Mammary epithelial cell (primary cell): ENCODE measurements at regions of chr1 and their contacts with region 1.

Region 1: GRCh38 chr1:205255941-205256780 is 28.4 kb downstream of the TMCC2 start:
- DNase-seq: peak; percentile 71
- H3K4me3 ChIP-seq: no peak overlapping the region
- H3K27ac ChIP-seq: no peak overlapping the region
- H3K4me1 ChIP-seq: peaks cover 30% of the 10 kb centered on the region
- H3K27me3 ChIP-seq: no peaks in the 10 kb centered on the region
- CTCF ChIP-seq: peak; percentile 95 to 98

Region 2: DNA sequence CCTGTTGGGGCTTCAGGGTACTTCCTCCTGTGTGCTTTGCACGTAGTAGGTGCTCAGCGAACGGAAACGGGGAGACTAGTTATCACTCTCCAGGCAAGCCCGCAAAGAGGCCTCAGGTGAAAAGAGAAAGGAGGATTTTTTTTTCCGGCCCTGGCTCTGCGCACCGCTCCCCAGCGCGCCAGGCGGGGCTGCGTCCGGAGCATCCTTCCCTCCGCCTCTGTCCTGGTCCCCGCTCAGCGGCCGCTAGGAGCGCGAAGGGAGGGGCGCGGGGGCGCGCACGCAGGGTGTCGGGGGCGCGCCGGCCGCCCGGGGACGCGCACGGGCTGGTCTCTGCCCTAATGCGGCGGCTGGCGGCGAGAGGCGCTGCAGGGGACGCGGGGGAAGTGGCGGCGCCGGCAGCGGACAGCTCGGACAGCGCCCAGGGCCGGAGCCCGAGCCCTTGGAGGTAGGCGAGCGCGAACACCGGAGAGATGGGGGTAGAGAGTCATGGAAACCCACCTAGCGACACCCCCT is 427.8 kb before region 1 on chr1:
- CTCF ChIA-PET with region 1: no interaction called
- dilution Hi-C with region 1: no loop called
- in situ Hi-C with region 1: no loop called
- intact Hi-C with region 1: loop called (anchors 5 kb)
- DNase-seq: peak; percentile 72
- H3K4me3 ChIP-seq: peak overlapping the region; percentile 23 to 62 (median 42)
- H3K27ac ChIP-seq: no peak overlapping the region
- H3K4me1 ChIP-seq: peaks cover 3% of the 10 kb centered on the region
- H3K27me3 ChIP-seq: peaks cover 2% of the 10 kb centered on the region
- CTCF ChIP-seq: peak in 1 of 2 donors; percentile 8

Region 3: GRCh38 chr1:204989266-204990058 is 266.7 kb before region 1 on chr1:
- CTCF ChIA-PET with region 1: interaction called, 6 read pairs
- dilution Hi-C with region 1: no loop called
- in situ Hi-C with region 1: loop called in 1 of 2 experiments (anchors 10 kb)
- intact Hi-C with region 1: loop called (anchors 1 kb)
- DNase-seq: peak; percentile 79
- H3K4me3 ChIP-seq: no peak overlapping the region
- H3K27ac ChIP-seq: no peak overlapping the region
- H3K4me1 ChIP-seq: peaks cover 4% of the 10 kb centered on the region
- H3K27me3 ChIP-seq: no peaks in the 10 kb centered on the region
- CTCF ChIP-seq: peak; percentile 99 to 100

Region 4: GRCh38 chr1:205061665-205062069 is 194.5 kb before region 1 on chr1:
- CTCF ChIA-PET with region 1: interaction called, 5 read pairs
- dilution Hi-C with region 1: no loop called
- in situ Hi-C with region 1: loop called in 1 of 2 experiments (anchors 10 kb)
- intact Hi-C with region 1: loop called (anchors 1 kb)
- DNase-seq: peak; percentile 48
- H3K4me3 ChIP-seq: no peak overlapping the region
- H3K27ac ChIP-seq: no peak overlapping the region
- H3K4me1 ChIP-seq: no peaks in the 10 kb centered on the region
- H3K27me3 ChIP-seq: no peaks in the 10 kb centered on the region
- CTCF ChIP-seq: peak; percentile 92 to 93

Region 5: DNA sequence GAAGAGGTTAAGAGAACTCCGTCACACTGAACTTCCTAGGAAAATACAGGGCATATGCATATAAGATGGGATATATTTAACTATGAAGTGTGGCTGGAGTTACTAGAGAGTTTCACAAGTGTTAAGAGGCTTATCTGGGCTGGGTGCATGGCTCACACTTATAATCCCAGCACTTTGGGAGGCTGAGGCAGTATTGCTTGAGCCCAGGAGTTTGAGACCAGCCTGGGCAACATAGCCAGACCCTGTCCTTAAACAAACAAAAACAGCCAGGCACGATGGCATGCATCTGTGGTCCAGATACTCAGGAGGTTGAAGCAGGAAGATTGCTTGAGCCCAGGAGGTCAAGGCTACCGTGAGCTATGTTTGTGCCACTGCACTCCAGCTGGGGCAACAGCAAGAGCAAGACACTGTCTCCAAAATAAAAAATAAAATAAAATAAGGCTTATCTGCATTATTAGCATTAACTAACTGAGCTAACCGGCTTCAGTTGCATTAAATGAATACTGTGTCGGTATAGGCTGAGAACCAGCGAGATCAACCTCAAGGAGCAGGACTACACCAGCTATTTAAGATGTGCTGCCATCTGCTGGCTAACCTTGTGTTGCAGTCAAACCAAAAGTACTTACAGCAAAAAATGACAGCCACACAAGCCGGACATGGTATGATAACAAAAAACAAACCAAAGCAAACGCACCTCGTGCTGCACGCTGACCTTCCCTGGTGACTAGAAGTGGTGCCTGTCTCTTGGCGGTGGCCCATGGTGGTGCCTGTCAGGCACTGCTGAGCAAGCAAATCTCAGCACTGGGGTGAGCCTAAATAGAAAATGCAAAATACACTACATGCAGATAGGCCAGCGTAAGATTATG is 114.7 kb before region 1 on chr1:
- CTCF ChIA-PET with region 1: interaction called, 3 read pairs
- dilution Hi-C with region 1: no loop called
- in situ Hi-C with region 1: no loop called
- intact Hi-C with region 1: loop called (anchors 1 kb)
- DNase-seq: peak; percentile 66
- H3K4me3 ChIP-seq: no peak overlapping the region
- H3K27ac ChIP-seq: no peak overlapping the region
- H3K4me1 ChIP-seq: peaks cover 8% of the 10 kb centered on the region
- H3K27me3 ChIP-seq: no peaks in the 10 kb centered on the region
- CTCF ChIP-seq: peak; percentile 69 to 74

Region 6: DNA sequence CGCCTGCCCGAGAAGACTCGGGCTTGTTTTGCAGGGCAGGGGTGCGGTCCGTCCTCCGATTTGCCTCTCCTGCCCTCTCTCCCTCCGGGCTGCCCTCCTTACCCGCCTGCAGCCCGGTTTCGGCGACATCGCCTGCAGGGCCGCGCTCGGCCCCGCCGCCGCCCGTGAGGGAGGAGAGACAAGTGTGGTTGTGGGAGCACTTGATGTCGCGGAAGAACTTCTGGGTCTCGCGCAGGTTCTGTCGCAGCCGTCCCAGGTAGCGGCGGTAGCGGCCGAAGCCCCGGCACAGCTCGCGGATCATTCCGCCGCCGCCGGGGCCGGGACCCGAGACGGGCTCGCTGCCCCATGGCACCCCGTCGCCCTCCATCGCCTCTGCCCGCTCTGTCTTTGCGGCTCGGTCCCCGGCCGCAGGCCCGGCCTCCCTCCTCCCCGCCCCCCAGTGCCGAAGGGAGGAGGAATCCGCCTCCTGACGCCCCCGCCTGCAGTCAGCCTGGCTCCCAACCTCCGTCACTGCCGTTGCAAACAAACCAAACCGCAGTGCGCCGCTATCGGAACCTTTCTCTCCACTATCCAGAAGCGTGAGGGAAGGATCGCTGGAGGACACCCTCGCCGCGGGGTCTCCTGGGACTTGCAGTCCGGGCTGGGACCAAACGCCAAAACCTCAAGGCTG is 44.9 kb before region 1 on chr1 and contains the start of gene DSTYK:
- CTCF ChIA-PET with region 1: no interaction called
- dilution Hi-C with region 1: no loop called
- in situ Hi-C with region 1: no loop called
- intact Hi-C with region 1: loop called (anchors 5 kb)
- DNase-seq: peak; percentile 93
- H3K4me3 ChIP-seq: peak within 1 kb of the TSS; percentile 71 to 97 (median 81)
- H3K27ac ChIP-seq: peak within 1 kb of the TSS; percentile 80
- H3K4me1 ChIP-seq: peaks cover 4% of the 10 kb centered on the region
- H3K27me3 ChIP-seq: no peaks in the 10 kb centered on the region
- CTCF ChIP-seq: no peak
- total RNA-seq, gene DSTYK: 11.0 to 19.2 TPM